HEK293 (cell line): ENCODE measurements at regions of chr7 and their contacts with region 1.

Region 1: DNA sequence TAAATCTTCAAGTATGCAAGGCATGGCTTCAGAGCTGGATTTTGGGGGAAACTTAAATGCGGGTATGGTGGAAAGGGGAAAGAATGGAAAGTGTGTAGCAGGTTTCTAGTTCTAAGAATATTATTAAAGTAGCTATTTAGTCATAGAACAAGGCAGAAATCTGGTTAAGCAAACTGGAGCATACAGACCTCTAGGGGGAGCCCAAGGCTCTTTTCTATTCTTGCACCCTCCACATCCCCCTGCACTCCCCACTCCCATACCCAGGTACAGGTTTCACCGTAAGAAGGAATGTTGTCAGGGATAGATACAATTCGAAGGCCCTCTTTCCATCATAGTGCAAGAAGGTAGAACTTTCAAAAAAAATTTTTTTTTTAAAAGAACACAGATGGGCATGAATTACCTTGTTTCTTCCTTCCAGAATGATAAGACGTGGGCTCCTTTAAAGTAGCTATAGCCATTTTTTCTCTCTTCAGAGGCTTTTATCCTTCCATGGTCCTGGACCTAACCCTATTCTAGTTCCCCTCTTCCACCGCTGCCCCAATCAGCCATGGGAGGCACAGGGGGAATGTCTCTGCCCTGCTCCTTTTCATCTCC is 41.5 kb upstream of the SMIM30 start:
- H3K4me3 ChIP-seq: no peak overlapping the region
- H3K27ac ChIP-seq: no peak overlapping the region
- H3K4me1 ChIP-seq: no peaks in the 10 kb centered on the region
- CTCF ChIP-seq: no peak

Region 2: DNA sequence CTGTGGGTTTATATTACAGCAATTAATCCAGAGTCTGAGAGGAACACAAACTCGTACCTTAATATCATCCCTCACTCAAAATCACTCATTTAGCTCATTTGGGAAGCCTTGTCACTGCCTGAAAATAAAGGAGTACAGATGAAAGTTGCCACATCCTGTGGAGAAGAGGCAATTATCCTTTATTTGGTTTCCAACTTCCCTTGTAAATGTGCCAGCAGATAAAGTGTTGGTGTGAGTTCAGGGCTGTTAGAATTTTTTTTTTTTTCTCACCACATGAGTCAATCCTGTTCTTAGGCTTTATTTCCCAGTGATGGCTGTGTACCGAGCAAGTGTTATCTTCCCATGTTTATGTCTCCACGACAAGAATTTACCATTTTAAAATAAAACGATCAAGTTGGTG is 57.5 kb after region 1 on chr7:
- CTCF ChIA-PET with region 1: interaction called, 14 read pairs
- POLR2A ChIA-PET with region 1: no interaction called
- H3K4me3 ChIP-seq: no peak overlapping the region
- H3K27ac ChIP-seq: no peak overlapping the region
- H3K4me1 ChIP-seq: 0 out of 2 replicates have a peak, but pooled peaks cover 2% of the 10 kb centered on the region
- CTCF ChIP-seq: no peak

Region 3: DNA sequence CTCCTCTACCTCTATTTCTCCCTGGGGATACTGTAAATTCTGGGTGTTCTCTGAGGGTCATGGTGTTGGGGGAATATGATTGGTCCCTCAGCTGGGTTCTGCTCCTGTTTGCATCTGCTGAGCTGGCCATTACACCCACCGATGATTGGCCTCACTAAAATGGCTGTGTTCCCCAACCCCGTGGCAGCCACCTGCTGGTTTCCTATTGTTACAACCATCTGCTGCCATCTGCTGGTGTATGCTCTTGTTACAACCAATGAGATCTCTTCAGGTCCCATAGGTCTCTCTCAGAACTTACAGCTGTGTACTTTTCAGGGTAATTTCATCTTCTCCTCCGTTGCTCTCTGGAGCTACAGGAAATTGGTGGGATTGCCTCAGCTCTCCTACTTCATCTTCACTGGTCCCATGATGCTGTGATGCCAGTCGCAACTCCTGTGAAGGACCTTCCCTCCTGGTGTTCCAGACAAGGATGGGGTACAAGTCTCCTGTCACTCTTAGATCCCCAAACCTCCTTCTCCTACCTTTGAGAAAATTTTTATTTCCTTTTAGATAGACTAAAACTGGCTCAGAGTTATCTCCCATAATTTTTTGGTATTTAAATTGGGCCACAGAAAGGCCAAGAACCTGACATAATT is 262.0 kb after region 1 on chr7:
- CTCF ChIA-PET with region 1: interaction called, 85 read pairs
- POLR2A ChIA-PET with region 1: no interaction called
- H3K4me3 ChIP-seq: no peak overlapping the region
- H3K27ac ChIP-seq: no peak overlapping the region
- H3K4me1 ChIP-seq: no peaks in the 10 kb centered on the region
- CTCF ChIP-seq: peak; percentile 74

Region 4: GRCh38 chr7:113710310-113711106 is 550.7 kb after region 1 on chr7:
- CTCF ChIA-PET with region 1: interaction called, 10 read pairs
- POLR2A ChIA-PET with region 1: no interaction called
- H3K4me3 ChIP-seq: no peak overlapping the region
- H3K27ac ChIP-seq: no peak overlapping the region
- H3K4me1 ChIP-seq: no peaks in the 10 kb centered on the region
- CTCF ChIP-seq: peak; percentile 53; the same call in 1 of the 2 replicates